ENCODE measurements at regions of chr12 and their contacts with region 1.

Region 1: GRCh38 chr12:43957732-43958372 is 122.0 kb downstream of the TMEM117 start:
- DNase-seq: peak; percentile 79
- ATAC-seq: peak; percentile 87
- H3K4me3 ChIP-seq: no peak overlapping the region
- H3K27ac ChIP-seq: no peak overlapping the region
- H3K4me1 ChIP-seq: no peaks in the 10 kb centered on the region
- H3K27me3 ChIP-seq: no peaks in the 10 kb centered on the region
- CTCF ChIP-seq: peak; percentile 83

Region 2: DNA sequence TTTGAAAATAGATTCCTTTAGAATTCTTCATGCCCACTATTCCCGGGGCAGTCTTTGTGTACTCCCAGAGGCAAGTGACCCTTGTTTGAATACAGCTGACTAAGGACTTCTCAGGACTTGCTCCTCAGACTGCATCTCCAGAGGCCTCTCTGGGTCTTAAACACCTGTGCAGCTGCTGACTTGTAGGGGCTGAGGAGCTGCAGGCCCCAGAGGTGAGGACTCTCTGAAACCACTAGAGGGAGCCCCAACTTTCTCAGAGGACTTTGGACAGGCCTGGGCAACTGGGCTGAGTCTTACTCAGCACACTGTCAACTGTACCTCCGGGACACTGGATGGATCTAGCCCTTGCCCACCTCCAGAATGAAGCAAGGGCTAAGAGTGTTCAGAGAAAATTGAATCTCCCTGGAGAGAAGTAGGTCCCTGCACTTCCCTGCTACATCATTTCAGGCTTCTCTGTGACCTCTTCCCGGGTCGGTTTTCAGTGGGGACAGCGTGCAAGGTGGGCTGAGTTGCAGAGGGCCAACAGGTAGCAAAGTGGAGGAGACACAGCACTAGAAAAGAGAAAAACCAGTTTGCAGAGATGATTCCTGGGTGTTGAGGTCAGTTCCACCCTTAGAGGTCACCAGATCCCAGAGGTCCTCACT is 42.6 kb after region 1 on chr12:
- CTCF ChIA-PET with region 1: no interaction called
- POLR2A ChIA-PET with region 1: no interaction called
- intact Hi-C with region 1: loop called (anchors 1 kb)
- DNase-seq: peak; percentile 80
- ATAC-seq: peak; percentile 98
- H3K4me3 ChIP-seq: no peak overlapping the region
- H3K27ac ChIP-seq: no peak overlapping the region
- H3K4me1 ChIP-seq: no peaks in the 10 kb centered on the region
- H3K27me3 ChIP-seq: no peaks in the 10 kb centered on the region
- CTCF ChIP-seq: peak; percentile 82

Region 3: DNA sequence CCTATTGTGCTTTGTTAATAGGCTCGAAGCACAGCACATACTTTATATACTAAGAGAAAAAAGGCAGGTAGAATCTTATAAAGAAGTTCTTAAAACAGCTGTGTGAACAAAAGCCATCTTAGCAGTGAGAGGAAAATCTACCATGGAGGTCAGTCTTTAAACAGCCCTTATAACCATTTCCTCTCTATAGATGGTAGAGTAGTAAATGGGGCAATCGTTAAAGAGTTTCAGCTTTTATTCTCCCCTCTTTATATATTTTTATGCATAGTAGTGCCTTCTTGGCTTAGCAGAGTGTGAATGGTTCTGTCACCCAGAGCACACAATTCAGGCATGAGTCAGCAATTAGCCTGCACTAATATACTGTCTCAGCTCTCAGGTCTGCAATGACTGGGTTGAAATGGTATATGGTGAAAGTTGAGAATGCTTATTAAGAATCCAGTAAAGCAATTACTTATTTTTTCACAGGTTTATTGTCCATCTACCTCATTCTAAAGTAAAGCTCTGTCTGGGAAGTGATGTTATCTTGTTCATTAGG is 613.2 kb after region 1 on chr12:
- CTCF ChIA-PET with region 1: no interaction called
- POLR2A ChIA-PET with region 1: no interaction called
- intact Hi-C with region 1: no loop called
- DNase-seq: no peak
- ATAC-seq: no peak
- H3K4me3 ChIP-seq: no peak overlapping the region
- H3K27ac ChIP-seq: no peak overlapping the region
- H3K4me1 ChIP-seq: no peaks in the 10 kb centered on the region
- H3K27me3 ChIP-seq: peaks cover 10% of the 10 kb centered on the region; the same call in 1 of the 2 replicates
- CTCF ChIP-seq: no peak

Measured in PC-3 (cell line).